GM13976 (cell line): ENCODE measurements at regions of chr4 and their contacts with region 1.

Region 1: DNA sequence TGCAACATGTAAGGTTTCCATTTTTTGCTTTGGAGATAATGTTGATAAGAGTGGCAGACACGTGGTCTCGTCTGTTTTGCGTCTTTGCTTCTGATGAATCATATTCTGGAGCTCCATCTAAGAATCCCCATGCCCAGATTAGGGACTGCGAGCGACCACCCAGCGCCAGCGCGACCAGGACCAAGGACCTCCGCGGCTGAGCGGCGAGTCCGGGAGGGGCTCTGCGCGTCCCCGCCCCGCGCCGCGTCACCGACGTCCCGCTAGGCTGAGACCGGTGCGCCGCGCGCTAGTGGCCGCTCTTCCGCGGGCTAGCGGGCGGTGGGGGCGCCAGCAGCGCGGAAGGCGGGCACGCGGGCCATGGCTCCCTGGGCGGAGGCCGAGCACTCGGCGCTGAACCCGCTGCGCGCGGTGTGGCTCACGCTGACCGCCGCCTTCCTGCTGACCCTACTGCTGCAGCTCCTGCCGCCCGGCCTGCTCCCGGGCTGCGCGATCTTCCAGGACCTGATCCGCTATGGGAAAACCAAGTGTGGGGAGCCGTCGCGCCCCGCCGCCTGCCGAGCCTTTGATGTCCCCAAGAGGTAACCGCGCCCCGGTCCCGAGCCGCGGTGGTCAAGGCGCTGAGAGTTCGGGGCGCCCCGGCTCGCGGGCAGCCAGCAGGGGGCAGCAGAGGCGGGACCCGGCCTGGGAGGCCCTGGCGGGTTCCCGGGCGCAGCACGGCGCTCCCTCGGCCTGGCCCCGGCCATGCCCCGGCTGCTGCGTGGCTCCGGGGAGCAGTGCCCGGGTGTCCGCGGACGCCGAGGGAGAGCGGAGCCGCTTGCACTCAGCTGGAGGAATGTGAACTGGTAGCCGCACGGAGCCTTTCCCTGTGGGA is at the start of gene SRD5A3:
- DNase-seq: peak; percentile 94
- CTCF ChIP-seq: peak; percentile 96

Region 2: DNA sequence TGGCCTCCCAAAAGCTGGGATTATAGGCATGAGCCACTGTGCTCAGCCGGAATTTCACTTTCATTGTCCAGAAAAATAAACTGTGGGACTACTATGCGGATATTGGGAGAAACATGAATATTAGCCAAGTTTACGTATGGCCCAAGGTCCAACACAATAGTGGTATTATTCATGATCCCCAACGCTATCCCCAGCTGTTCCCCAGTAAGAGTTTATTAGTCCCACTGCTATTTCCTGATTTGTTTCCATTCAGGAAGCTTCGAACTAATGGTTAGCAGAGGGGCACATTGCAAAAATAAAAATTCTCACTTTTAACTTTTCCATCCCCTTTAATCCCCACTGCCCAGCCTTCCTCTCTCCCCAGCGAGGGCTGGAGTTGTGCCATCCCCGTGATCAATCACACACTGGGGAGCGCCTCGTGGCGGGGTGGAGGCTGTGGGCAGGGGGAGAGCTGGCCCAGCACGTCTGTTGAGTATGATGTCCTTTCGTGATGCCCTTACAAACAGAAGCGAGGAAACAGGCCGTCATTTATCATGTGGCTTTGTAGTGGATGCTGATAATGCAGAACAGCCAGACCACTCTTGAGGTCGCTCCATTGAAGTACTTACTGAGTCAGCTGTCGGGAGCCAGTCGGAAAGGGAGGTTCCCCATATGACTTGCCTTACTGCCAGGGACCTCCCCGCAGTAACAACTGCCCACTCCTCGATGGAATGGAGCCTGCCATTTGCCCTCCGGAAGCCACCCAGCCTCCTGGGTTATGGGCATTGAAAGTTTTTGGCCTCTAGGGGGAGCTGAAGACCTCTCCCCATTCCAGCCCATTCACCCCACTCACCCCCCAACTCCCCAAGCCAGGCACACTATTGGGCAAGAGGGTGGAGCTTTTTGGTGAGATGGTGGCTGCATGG is 337.8 kb before region 1 on chr4:
- in situ Hi-C with region 1: no loop called
- DNase-seq: peak; percentile 30
- CTCF ChIP-seq: peak; percentile 34

Region 3: DNA sequence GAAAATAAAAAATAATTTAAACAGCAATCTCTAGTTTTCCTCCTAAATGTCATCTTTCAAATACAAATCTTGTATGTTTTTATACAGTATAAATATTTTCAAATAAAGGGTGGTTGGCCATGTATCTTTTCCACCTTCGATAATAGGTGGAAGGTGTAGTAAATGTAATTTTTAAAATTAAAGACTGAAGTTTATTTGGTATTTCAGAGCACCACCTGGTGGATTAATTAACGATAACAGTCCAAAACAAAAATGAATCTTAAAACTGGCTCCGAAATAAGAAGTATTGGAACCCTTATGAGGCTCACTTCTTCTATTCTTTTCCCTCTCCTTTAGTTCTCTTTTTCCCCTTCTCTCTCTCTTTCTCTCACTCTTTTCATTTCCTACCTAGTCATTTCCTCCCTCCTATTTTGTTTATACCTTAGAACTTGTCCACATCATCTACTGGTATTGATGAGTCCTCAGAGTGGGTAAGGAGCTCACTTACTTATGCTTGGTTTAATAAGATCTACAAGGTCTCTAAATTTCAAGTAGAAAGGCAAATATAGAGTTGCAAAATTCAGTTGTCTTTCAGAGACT is 390.5 kb after region 1 on chr4:
- in situ Hi-C with region 1: loop called (anchors 25 kb)
- DNase-seq: peak; percentile 28
- CTCF ChIP-seq: no peak